ENCODE measurements at regions of chr9 and their contacts with region 1.

Region 1: DNA sequence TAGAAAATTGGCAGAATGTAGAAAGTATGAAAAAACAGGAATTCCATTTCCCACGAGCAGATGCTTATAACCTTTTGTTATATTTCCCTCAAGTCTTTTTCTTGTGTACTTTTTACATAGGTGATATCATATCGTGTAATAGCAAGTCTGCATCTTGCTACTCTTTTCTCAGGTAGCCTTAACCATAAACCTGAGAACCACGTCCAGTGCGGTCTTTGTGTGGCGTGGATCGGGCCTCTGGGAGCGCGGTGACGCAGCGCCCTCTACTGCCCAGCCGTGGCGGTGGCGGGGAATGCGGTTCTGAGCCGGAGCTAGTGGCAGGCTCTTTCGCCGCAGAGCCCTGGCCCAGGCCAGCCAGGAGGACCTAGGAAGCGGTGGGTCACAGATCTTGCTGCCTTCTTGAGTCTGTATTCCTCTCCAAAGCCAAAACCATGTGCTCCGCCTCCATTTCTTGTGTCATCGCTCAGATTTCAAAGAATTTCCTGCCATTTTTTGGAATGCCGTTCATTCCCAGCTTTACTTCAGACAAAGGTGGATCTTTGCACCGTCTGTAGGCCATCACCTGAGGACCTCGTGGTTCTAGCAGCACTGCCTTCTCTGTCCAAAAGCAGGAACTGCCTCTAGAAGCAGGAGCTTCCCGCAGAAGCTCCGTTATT is 71.9 kb downstream of the MVB12B start:
- DNase-seq: peak; percentile 69 to 85
- H3K4me3 ChIP-seq: no peak overlapping the region
- H3K27ac ChIP-seq: no peak overlapping the region
- H3K4me1 ChIP-seq: peaks cover 0 to 3% (median 0%) of the 10 kb centered on the region in 4 donors
- H3K27me3 ChIP-seq: no peaks in the 10 kb centered on the region
- CTCF ChIP-seq: peak; percentile 89 to 95

Region 2: GRCh38 chr9:126301985-126302603 is 96.4 kb before region 1 on chr9:
- intact Hi-C with region 1: loop called (anchors 5 kb)
- DNase-seq: peak in 1 of 2 donors; percentile 48
- H3K4me3 ChIP-seq: no peak overlapping the region
- H3K27ac ChIP-seq: no peak overlapping the region
- H3K4me1 ChIP-seq: no peaks in the 10 kb centered on the region
- H3K27me3 ChIP-seq: peaks cover 0 to 20% of the 10 kb centered on the region in 2 donors
- CTCF ChIP-seq: peak; percentile 57 to 62

Region 3: DNA sequence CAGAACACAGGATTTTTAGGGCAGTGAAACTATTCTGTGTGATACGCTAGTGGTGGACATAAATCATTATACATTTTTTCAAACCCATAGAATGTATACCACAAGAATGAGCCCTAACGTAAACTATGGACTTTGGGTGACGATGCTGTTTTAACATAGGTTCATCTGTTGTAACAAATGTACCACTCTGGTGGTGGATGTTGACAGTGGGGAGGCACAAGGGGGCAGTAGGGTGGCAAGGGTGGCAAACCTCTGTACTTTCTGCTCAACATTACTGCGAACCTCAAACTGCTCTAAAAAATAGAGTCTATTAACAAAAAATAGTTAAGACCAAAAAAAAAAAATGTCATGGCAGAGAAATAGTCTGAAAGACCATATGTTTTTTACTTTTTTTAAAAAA is 81.0 kb before region 1 on chr9:
- intact Hi-C with region 1: loop called (anchors 5 kb)
- DNase-seq: no peak
- H3K4me3 ChIP-seq: no peak overlapping the region
- H3K27ac ChIP-seq: no peak overlapping the region
- H3K4me1 ChIP-seq: no peaks in the 10 kb centered on the region
- H3K27me3 ChIP-seq: no peaks in the 10 kb centered on the region
- CTCF ChIP-seq: peak; percentile 24 to 29

Region 4: DNA sequence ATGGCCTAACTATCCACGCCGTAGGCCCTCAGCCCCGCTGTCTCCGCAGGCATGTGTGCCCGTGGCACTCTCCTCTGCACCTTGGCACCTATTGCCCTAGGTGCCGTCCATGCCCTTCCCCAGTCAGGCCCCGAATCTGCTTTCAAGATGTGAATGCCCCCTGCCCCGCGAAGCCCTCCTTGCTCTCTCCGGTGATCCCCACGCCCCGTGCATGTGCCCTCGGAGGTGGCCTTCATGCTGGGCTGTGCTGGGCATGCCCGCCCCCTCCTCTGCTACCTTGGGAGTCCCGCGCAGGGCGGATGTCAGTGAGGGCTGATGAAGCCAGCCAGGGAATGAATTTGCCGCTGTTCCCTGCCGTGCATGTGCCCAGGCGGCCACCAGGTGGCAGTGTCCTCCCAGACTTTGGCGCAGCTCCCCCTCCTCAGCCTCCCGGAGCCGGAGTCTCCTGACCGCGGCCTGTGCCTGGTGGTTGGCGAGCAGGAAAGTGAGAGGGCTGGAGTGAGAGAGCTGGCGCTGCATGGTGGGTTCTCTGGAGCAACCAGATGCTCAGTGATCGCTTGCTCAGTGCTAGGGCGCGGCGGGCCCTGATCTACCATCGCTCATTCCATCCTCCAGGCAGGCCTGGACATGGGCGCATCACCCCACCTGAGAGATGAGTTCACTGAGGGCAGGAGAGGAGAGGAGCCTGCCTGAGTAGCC is 102.3 kb after region 1 on chr9:
- intact Hi-C with region 1: loop called (anchors 5 kb)
- DNase-seq: peak; percentile 47 to 80
- H3K4me3 ChIP-seq: no peak overlapping the region
- H3K27ac ChIP-seq: no peak overlapping the region
- H3K4me1 ChIP-seq: peaks cover 0 to 27% (median 17%) of the 10 kb centered on the region in 4 donors
- H3K27me3 ChIP-seq: peaks cover 0 to 10% of the 10 kb centered on the region in 2 donors
- CTCF ChIP-seq: peak; percentile 84 to 91

Region 5: DNA sequence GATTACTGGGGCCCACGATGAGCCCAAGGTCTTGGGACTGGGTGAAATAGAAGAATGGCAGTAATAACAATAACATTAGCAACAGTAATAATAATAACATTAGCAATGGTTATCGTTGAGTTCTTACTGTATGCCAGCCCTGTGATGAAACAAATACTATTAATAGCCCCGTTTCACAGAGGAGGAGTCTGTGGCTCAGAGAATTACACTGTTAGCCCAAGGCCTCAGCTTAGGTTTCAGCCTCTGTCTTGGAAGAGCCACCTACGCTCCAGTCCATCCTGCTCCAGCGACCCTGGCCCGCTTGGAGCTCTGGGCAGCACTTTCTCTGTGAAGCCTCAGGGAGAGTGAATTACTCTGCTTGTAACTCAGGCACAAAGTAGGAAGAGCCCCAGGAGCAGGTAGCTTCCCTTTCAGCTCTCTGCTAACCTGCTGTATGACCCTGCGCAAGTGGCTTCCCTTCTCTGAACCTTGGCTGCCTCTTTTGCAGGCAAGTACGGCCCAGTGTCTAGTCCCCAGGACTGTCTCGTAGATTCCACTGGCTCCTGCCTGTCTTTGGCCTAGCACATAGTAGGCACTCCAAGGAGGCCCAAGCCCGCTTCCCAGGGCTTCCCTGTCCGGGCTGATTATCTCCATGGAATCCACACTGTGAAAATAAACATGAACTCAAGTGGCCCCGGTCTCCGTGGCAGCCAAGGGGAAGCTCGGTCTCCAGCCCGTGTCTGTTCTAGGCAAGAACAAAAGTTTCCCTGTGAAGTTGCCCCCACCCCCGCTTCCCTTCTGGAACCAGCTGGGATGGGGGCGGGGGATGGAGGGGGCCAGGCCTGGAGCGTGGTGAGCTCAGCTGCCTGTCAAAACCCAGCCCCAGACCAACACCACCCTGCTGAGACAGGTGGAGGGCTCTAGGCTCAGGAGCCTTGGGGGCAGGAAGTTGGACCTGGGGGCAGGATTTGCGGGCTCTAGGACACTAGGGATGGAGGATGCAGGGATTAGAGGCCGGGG is 189.0 kb after region 1 on chr9:
- intact Hi-C with region 1: no loop called
- DNase-seq: peak in 1 of 2 donors; percentile 51
- H3K4me3 ChIP-seq: no peak overlapping the region
- H3K27ac ChIP-seq: no peak overlapping the region
- H3K4me1 ChIP-seq: peaks cover 0 to 18% (median 5%) of the 10 kb centered on the region in 4 donors
- H3K27me3 ChIP-seq: peaks cover 0 to 30% of the 10 kb centered on the region in 2 donors
- CTCF ChIP-seq: no peak